Ascending aorta (tissue), 2 donors: ENCODE measurements at regions of chr10 and their contacts with region 1.

Region 1: DNA sequence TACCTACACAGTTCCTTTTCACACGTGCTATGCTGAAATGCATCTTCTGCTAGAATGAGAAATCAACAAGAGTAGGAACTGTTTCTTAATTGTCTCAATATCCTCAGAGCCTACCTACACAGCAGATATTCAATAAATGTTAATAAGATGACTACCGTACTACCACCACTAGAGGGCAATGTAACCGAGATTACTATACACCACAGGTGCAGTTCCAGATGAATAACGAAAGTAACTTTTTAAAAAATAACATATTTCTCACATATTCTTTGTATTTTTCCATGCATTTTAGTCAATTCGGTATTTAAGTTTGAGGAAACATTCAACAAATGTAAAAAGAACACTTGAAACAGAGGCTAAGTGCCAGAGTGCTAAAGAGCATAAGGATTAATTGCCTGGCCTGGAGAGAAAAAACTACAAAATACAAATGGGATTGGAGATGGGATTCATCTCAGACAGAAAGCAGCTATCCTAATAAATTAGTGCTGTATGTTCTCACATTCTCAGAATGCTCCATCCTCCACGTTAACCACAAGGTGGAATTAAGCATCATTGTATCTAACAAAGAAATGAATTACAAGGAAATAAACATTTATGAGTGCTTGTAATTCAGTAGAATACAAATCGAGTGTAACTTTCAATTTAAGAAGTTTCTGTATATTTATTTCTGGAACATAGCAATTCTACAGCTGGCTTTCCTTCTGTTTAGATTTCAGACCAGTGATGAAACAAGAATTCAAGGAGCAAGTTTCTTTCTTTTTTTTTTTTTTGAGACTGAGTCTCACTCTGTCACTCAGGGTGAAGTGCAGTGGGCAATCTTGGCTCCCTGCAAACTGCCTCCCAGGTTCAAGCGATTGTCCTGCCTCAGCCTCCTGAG is 20.3 kb upstream of the HECTD2 start:
- DNase-seq: no peak
- H3K4me3 ChIP-seq: peak overlapping the region in 1 of 2 donors; percentile 54
- H3K27ac ChIP-seq: no peak overlapping the region
- H3K4me1 ChIP-seq: no peaks in the 10 kb centered on the region
- H3K27me3 ChIP-seq: no peaks in the 10 kb centered on the region
- CTCF ChIP-seq: peak in 2 of 3 experiments; percentile 65 to 67

Region 2: DNA sequence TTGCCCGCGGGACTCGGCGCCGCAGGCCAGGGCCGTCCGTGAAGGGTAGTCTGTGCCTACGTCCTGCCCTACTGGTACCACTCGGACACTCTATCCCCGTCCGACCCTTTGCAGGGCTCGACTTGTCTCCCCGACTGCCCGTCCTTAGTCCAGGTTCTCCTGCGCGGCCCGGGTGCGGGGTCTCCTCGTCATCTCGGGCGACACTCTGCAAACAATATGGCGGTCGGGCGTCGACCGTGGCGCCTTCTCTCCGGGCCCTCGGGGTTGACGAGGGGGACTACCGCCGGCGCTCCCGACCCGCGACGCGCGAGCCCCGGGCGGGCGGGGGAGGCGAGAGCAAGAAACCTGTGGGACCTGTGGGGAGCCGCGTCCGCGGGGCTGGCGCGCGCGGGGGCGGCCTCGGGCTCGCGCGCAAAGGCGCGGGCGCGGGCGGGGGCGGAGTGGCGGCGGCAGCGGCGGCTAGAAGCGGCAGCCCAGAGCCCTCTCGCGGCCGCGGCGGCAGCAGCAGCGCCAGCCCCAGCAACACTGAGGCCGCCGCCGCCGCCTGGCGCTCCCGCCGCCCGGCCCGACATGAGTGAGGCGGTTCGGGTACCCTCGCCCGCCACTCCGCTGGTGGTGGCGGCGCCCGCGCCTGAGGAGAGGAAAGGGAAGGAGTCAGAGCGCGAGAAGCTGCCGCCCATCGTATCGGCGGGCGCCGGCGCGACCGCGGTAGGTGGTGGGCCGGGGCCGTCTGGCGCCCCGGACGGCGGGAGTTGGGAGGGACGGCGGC is 20.2 kb after region 1 on chr10 and contains the start of gene HECTD2:
- intact Hi-C with region 1: loop called (anchors 1 kb)
- DNase-seq: peak in 1 of 2 donors; percentile 85
- H3K4me3 ChIP-seq: peak within 1 kb of the TSS; percentile 90 to 95
- H3K27ac ChIP-seq: peak within 1 kb of the TSS; percentile 99 to 100
- H3K4me1 ChIP-seq: peaks cover 2 to 7% of the 10 kb centered on the region in 2 donors
- H3K27me3 ChIP-seq: no peaks in the 10 kb centered on the region
- CTCF ChIP-seq: peak in 2 of 3 experiments; percentile 36 to 76
- total RNA-seq, gene HECTD2: 25.4 TPM

Region 3: GRCh38 chr10:91444211-91445182 is 54.6 kb after region 1 on chr10:
- intact Hi-C with region 1: no loop called
- DNase-seq: no peak
- H3K4me3 ChIP-seq: no peak overlapping the region
- H3K27ac ChIP-seq: no peak overlapping the region
- H3K4me1 ChIP-seq: no peaks in the 10 kb centered on the region
- H3K27me3 ChIP-seq: no peaks in the 10 kb centered on the region
- CTCF ChIP-seq: no peak

Region 4: GRCh38 chr10:91479583-91479982 is 89.7 kb after region 1 on chr10:
- intact Hi-C with region 1: loop called (anchors 10 kb)
- DNase-seq: no peak
- H3K4me3 ChIP-seq: no peak overlapping the region
- H3K27ac ChIP-seq: no peak overlapping the region
- H3K4me1 ChIP-seq: no peaks in the 10 kb centered on the region
- H3K27me3 ChIP-seq: no peaks in the 10 kb centered on the region
- CTCF ChIP-seq: no peak